Left ventricle myocardium inferior (tissue), 1 donor: ENCODE measurements at regions of chr6 and their contacts with region 1.

Region 1: GRCh38 chr6:42453031-42453653 is 1.4 kb upstream of the TRERF1 start:
- DNase-seq: peak; percentile 90
- H3K4me3 ChIP-seq: peak overlapping the region; percentile 79
- H3K27ac ChIP-seq: peak overlapping the region; percentile 92
- H3K4me1 ChIP-seq: peaks cover 59% of the 10 kb centered on the region
- H3K27me3 ChIP-seq: no peaks in the 10 kb centered on the region
- CTCF ChIP-seq: peak; percentile 10

Region 2: DNA sequence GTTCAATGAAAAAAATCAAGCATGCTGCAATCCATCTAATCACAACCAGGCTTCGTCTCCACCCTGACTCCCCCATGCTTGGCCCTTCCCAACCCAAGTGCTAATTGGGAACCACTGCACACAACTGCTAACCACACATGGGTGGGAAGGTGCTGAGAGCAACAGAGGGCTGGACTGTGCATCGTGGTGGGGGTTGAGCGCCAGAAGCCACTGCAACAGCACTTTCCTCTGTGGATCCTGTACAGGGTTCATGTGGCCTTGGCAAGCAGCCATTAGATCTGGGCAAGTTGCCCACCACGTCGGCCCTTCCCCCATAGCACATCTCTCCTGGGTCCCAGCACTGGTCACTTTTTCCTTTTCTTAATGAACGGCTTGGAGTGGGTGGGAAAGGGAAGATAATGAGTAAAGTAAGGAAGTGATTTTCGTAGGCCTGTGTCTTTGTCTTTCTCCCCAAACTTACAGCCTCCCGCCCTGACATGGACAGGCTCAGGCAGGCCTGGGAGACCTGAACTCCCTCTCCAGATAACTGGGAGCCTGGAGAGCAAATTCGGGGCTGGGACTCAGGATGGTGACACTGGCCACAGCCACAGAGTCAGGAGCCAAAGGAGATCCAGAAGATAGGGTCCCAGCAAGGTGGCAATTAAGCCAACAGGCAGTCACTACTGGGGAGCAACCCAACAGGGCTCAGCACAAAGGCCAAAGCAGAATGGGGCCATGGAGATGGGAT is 201.1 kb before region 1 on chr6:
- intact Hi-C with region 1: loop called (anchors 10 kb)
- DNase-seq: peak; percentile 82
- H3K4me3 ChIP-seq: no peak overlapping the region
- H3K27ac ChIP-seq: peak overlapping the region; percentile 82
- H3K4me1 ChIP-seq: peaks cover 54% of the 10 kb centered on the region
- H3K27me3 ChIP-seq: no peaks in the 10 kb centered on the region
- CTCF ChIP-seq: no peak

Region 3: DNA sequence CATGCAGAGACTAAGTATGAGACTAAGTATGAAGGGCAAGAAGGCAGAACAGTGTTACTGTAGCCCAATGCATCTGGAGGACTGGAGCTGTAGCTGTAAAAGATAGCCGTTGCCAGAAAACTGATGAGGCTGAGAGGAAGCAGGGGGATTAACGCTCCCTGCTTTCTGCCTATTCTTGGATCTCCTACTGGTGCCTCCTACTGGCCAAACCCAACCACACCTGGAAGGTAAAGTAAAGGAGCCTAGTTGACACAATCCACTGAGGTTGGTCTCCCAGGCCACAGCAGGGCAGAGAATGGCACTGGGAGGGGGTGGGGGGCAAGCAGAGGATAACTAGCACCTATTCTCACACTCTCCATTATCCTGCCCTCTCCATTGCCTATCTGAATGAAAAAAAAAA is 130.5 kb before region 1 on chr6:
- intact Hi-C with region 1: no loop called
- DNase-seq: no peak
- H3K4me3 ChIP-seq: no peak overlapping the region
- H3K27ac ChIP-seq: no peak overlapping the region
- H3K4me1 ChIP-seq: no peaks in the 10 kb centered on the region
- H3K27me3 ChIP-seq: no peaks in the 10 kb centered on the region
- CTCF ChIP-seq: peak; percentile 8

Region 4: DNA sequence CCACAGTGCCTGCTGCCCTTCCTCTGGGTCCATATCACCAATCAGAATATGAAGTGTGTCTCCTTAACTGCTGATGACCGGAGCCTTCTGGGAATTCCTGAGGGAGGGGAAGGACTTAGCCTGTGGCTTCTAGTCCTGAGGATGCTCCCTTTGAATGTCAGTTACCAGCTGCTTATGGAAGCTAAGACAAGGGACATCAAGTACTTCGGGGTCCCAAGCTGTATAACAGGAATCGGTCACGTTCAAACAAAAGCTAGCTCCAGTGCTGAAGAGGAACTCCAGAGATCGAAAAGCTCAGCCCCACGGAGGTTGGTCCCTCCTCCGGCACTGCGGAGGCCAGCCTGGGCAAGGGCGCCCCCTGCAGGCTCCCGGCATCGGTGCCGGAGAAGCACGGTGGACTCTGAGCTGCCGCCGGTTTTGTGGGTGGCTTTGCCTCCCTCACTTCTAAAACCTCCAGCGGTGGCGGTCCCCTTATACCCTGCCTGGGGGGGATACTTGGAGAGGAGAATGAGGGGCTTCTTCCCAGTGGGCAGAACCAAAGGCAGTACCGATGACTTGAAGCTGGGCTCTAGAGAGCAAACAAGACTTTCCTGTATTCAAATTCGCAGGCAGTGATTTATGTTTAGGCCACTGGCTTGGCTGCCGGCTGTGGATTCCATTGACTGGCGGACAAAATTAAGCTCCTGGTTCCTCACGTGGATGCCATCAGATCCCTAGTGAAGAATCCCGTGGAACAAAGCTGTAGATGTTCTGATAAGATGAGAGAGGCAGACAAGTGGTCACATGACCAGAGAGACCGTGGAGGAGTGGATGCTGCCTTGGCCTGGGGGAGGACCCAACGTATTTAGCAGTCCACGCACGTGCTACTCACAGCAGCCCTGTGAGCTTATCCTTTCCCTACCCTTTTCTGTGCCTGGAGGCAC is 94.5 kb after region 1 on chr6:
- intact Hi-C with region 1: loop called (anchors 10 kb)
- DNase-seq: peak; percentile 85
- H3K4me3 ChIP-seq: peak overlapping the region; percentile 68
- H3K27ac ChIP-seq: peak overlapping the region; percentile 56
- H3K4me1 ChIP-seq: peaks cover 11% of the 10 kb centered on the region
- H3K27me3 ChIP-seq: peaks cover 5% of the 10 kb centered on the region
- CTCF ChIP-seq: peak; percentile 99